Naive thymus-derived CD4-positive, alpha-beta T cell (primary cell): ENCODE measurements at regions of chr6 and their contacts with region 1.

Region 1: DNA sequence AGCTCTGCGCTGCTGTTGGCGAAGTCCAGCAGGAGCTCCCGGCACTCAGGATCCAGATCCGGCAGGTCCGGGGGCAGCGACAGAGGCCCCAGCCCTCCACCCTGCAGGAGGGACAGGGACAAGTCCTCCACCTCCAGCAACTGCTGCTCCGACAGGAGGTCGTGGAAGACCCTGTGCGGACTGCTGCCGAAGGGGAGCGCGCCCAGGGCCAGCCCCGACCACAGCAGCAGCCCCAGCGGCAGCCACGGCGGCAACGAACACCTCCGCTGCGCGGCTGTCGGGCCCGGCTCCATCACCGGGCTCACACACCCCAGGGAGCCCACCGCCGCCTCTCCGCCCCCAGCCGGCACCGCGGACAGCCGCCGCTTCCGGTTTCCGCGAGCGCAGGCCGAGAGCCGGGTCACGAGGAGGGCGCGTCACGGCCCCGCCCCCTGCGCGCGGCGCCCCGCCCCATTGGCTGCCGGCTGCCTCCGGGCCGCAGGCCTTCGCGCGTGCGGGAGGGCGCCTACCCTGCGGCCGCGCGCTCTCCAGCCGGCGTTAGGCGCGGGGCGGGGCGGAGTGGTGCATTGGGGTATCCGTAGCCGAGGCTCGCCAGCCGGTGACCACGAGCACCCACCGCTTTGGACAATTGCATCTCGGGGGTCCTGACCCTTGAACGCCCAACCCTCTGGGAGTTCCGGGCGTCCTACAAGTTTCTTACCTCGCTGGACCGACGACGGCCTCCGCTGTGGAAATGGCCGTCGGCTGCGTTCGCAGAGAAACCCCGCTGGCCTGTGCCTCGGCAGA is at the start of gene OSTM1:
- DNase-seq: peak; percentile 88 to 98 (median 94)
- ATAC-seq: peak; percentile 99
- H3K4me3 ChIP-seq: peak within 1 kb of the TSS; percentile 99
- H3K4me3 Mint-ChIP-seq: peak within 1 kb of the TSS; percentile 84 to 94 (median 90)
- H3K27ac ChIP-seq: peak within 1 kb of the TSS; percentile 89
- H3K27ac Mint-ChIP-seq: peak within 1 kb of the TSS; percentile 81 to 98 (median 91)
- H3K4me1 ChIP-seq: peaks cover 18% of the 10 kb centered on the region in 2 donors
- H3K4me1 Mint-ChIP-seq: peaks cover 11 to 35% (median 23%) of the 10 kb centered on the region in 7 donors
- H3K27me3 ChIP-seq: no peaks in the 10 kb centered on the region
- H3K27me3 Mint-ChIP-seq: peaks cover 0 to 25% (median 4%) of the 10 kb centered on the region in 5 donors
- total RNA-seq, gene OSTM1: 25.0 to 48.9 (median 36.7) TPM

Region 2: DNA sequence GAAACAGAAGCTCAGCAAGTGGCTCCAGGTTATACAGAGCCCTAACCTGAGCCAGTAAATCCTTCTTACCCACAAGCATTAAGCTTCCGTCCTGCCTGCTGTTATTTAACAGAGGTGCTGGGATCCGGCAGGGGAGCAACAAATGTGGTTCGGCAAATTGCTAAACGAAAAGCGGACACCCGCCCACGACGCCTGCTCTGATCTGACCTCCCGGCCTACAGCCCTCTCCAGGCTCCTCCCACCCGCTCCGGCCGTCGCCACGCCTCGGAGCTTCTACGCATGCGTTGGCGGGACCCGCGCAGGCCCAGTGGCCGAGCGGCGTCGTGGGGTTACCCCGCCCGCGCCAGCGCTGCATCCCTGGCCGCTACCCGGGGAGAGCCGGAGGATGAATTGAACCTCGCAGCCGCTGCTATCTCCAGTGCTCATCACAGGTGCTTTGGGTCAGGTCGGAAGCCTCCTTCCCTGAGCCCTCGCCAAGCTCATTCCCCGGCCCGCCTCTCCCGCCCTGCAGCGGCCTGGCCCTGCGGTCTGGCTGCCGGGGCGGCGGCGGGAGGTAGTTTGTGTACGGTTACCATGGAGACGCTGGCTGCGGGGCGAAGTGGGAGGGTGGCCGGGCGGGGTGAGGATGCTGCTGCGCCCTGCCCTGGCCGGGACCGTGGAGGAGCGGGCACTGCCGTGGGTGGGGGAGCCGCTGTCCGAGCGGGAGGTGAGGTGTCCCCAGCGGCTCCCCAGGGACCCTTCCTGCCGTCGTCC is 773.7 kb after region 1 on chr6 and contains the start of gene ARMC2:
- CTCF ChIA-PET with region 1: no interaction called
- POLR2A ChIA-PET with region 1: no interaction called
- intact Hi-C with region 1: loop called in 1 of 2 experiments (anchors 2 kb)
- DNase-seq: peak; percentile 72 to 95 (median 79)
- ATAC-seq: peak; percentile 94
- H3K4me3 ChIP-seq: peak within 1 kb of the TSS; percentile 90
- H3K4me3 Mint-ChIP-seq: peak within 1 kb of the TSS; percentile 75 to 93 (median 88)
- H3K27ac ChIP-seq: peak within 1 kb of the TSS; percentile 69
- H3K27ac Mint-ChIP-seq: peak within 1 kb of the TSS; percentile 72 to 93 (median 85)
- H3K4me1 ChIP-seq: peaks cover 6 to 13% of the 10 kb centered on the region in 2 donors
- H3K4me1 Mint-ChIP-seq: peaks cover 11 to 39% (median 29%) of the 10 kb centered on the region in 7 donors
- H3K27me3 ChIP-seq: no peaks in the 10 kb centered on the region
- H3K27me3 Mint-ChIP-seq: peaks cover 0 to 36% (median 0%) of the 10 kb centered on the region in 5 donors
- total RNA-seq, gene ARMC2: 6.2 to 12.7 (median 7.9) TPM